Astrocyte of the cerebellum (primary cell): ENCODE measurements at regions of chr3 and their contacts with region 1.

Region 1: GRCh38 chr3:36792342-36792741 is 28.0 kb upstream of the DCLK3 start:
- DNase-seq: no peak
- H3K4me3 ChIP-seq: no peak overlapping the region
- CTCF ChIP-seq: peak; percentile 57

Region 2: DNA sequence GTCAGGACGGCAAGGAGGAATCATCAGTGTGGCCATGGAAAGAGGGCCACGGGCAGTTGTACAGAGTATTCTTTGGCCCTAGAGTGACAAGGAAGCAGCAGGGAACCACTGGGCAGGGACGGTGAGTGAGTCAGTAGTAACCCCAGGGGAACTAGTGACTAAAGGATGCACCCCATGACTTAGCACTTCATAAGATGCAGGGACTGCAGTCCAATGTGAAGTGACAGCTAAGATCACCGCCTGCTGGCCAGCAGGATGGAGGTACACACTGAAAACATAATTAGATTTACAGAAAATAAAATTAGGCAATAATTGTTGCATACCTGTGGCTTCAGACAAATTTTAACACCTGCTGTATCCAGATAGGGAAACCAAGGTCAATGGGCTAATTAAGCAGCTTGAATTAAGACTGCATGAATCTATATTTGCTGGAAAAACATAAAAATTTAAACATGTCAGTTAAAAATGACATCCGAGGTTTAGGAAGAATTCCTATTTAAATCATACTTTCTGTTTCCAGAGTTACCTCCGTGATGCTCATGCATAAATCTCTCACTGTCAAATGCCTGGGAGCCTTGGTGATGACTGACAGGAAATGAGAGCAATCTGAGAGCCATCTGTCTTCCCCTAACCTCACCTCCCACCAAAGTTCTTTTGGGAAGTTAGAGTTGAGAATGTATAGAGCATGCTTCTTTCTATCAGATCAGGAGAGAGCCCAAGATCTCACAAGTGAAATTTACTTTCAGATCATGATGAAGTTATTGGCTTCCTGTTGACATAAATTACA is 84.5 kb before region 1 on chr3:
- in situ Hi-C with region 1: no loop called
- DNase-seq: no peak
- H3K4me3 ChIP-seq: no peak overlapping the region
- CTCF ChIP-seq: peak; percentile 38

Region 3: DNA sequence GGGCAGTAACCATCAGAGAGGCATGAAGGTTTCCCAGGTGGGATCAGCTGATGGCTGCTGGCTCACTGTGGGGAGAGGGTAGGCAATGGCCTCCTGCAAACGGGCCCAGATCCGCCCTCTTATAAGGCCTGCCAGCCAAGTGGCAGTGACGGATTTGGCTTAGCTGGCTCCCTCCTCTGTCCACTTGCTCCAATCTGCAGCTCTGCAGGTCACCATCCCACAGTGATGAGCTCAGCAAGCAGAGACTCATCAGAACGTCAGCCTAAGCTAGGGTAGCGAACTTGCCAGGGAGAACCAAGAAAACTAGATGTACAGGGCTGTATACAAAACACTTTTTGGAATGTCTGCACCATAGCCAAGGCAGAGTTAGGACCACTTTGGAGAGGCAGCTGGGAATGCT is 34.8 kb after region 1 on chr3:
- in situ Hi-C with region 1: loop called (anchors 5 kb)
- DNase-seq: no peak
- H3K4me3 ChIP-seq: no peak overlapping the region
- CTCF ChIP-seq: no peak